Activated CD8-positive, alpha-beta T cell treated with anti-CD3 and anti-CD28 coated beads for 36 hours (primary cell): ENCODE measurements at regions of chr10 and their contacts with region 1.

Region 1: GRCh38 chr10:6920072-6921019 is 340.3 kb upstream of the PRKCQ start:
- DNase-seq: peak; percentile 92
- ATAC-seq: peak; percentile 97
- H3K4me3 Mint-ChIP-seq: no peak overlapping the region
- H3K27ac Mint-ChIP-seq: no peak overlapping the region
- H3K4me1 Mint-ChIP-seq: peaks cover 22% of the 10 kb centered on the region
- H3K27me3 Mint-ChIP-seq: peaks cover 1% of the 10 kb centered on the region
- CTCF ChIP-seq: peak; percentile 64

Region 2: DNA sequence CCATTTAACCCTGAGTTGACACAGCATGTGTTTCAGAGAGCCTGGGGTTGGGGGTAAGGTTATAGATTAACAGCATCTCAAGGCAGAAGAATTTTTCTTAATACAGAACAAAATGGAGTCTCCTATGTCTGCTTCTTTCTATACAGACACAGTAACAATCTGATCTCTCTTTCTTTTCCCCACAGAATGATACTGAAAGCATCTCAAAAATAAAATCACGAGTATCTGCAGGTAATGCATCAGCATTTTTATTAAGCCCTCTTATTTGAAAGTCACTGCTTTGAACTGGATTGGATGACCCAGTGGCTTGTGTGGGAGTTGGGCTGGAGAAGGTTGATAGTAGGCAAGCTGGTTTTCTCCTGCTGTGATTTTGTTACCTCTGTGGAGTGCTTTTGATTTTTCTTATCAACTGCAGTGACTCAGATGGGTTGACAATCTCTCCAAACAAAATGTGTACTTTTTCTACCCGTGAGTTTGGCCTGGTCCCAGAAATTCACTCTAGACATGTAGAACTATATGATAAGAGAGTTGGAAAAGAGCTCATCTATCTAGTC is 86.8 kb before region 1 on chr10:
- CTCF ChIA-PET with region 1: no interaction called
- POLR2A ChIA-PET with region 1: no interaction called
- intact Hi-C with region 1: no loop called
- DNase-seq: no peak
- ATAC-seq: no peak
- H3K4me3 Mint-ChIP-seq: no peak overlapping the region
- H3K27ac Mint-ChIP-seq: no peak overlapping the region
- H3K4me1 Mint-ChIP-seq: no peaks in the 10 kb centered on the region
- H3K27me3 Mint-ChIP-seq: peaks cover 2% of the 10 kb centered on the region
- CTCF ChIP-seq: no peak

Region 3: GRCh38 chr10:7027913-7028808 is 107.8 kb after region 1 on chr10:
- CTCF ChIA-PET with region 1: interaction called, 16 read pairs
- POLR2A ChIA-PET with region 1: no interaction called
- intact Hi-C with region 1: loop called (anchors 10 kb)
- DNase-seq: peak; percentile 22
- ATAC-seq: peak; percentile 83
- H3K4me3 Mint-ChIP-seq: no peak overlapping the region
- H3K27ac Mint-ChIP-seq: peak overlapping the region; percentile 80
- H3K4me1 Mint-ChIP-seq: peaks cover 44% of the 10 kb centered on the region
- H3K27me3 Mint-ChIP-seq: no peaks in the 10 kb centered on the region
- CTCF ChIP-seq: no peak

Region 4: GRCh38 chr10:7111561-7111960 is 191.2 kb after region 1 on chr10:
- CTCF ChIA-PET with region 1: interaction called, 8 read pairs
- POLR2A ChIA-PET with region 1: no interaction called
- intact Hi-C with region 1: loop called (anchors 10 kb)
- DNase-seq: no peak
- ATAC-seq: no peak
- H3K4me3 Mint-ChIP-seq: no peak overlapping the region
- H3K27ac Mint-ChIP-seq: no peak overlapping the region
- H3K4me1 Mint-ChIP-seq: peaks cover 10% of the 10 kb centered on the region
- H3K27me3 Mint-ChIP-seq: peaks cover 2% of the 10 kb centered on the region
- CTCF ChIP-seq: no peak

Region 5: GRCh38 chr10:7260412-7260900 is 340.1 kb after region 1 on chr10:
- CTCF ChIA-PET with region 1: interaction called, 3 read pairs
- POLR2A ChIA-PET with region 1: no interaction called
- intact Hi-C with region 1: loop called (anchors 10 kb)
- DNase-seq: peak; percentile 31
- ATAC-seq: peak; percentile 17
- H3K4me3 Mint-ChIP-seq: no peak overlapping the region
- H3K27ac Mint-ChIP-seq: peak overlapping the region; percentile 46
- H3K4me1 Mint-ChIP-seq: peaks cover 58% of the 10 kb centered on the region
- H3K27me3 Mint-ChIP-seq: no peaks in the 10 kb centered on the region
- CTCF ChIP-seq: peak; percentile 67

Region 6: DNA sequence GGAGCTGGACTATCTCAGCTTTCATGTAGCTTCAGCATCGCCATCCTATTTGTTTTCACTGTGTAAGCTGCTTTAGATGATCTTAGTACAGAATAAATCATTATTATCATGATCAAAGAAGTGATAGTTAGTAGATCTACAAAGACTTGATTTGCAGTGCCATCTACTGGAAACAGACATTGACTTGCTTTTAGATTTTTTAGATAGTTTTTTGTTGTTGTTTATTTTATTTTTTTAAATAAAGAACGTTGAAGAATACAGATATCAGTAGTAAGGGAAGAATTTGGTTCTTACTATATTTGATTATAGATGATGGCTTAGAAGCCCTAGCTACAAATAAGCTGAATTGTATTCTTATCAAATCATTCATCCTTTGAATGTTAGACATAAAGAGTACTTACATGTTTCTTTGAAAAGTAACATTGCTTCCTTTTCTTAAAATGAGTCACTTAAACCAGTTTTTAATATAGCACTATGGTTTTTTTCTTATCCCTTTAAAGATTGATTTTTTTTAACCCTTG is 496.8 kb after region 1 on chr10:
- CTCF ChIA-PET with region 1: interaction called, 59 read pairs
- POLR2A ChIA-PET with region 1: no interaction called
- intact Hi-C with region 1: loop called (anchors 2 kb)
- DNase-seq: no peak
- ATAC-seq: peak; percentile 31
- H3K4me3 Mint-ChIP-seq: no peak overlapping the region
- H3K27ac Mint-ChIP-seq: peak overlapping the region; percentile 72
- H3K4me1 Mint-ChIP-seq: peaks cover 23% of the 10 kb centered on the region
- H3K27me3 Mint-ChIP-seq: peaks cover 12% of the 10 kb centered on the region
- CTCF ChIP-seq: peak; percentile 73